ENCODE measurements at regions of chr1 and their contacts with region 1.

Region 1: GRCh38 chr1:33472349-33472980 is at the start of gene ZSCAN20:
- DNase-seq: peak; percentile 96
- ATAC-seq: peak; percentile 95
- H3K4me3 Mint-ChIP-seq: peak within 1 kb of the TSS; percentile 72
- H3K27ac Mint-ChIP-seq: peak within 1 kb of the TSS; percentile 82
- H3K4me1 Mint-ChIP-seq: peaks cover 18% of the 10 kb centered on the region
- H3K27me3 Mint-ChIP-seq: no peaks in the 10 kb centered on the region
- CTCF ChIP-seq: no peak
- total RNA-seq, gene ZSCAN20: 2.6 to 3.2 TPM

Region 2: DNA sequence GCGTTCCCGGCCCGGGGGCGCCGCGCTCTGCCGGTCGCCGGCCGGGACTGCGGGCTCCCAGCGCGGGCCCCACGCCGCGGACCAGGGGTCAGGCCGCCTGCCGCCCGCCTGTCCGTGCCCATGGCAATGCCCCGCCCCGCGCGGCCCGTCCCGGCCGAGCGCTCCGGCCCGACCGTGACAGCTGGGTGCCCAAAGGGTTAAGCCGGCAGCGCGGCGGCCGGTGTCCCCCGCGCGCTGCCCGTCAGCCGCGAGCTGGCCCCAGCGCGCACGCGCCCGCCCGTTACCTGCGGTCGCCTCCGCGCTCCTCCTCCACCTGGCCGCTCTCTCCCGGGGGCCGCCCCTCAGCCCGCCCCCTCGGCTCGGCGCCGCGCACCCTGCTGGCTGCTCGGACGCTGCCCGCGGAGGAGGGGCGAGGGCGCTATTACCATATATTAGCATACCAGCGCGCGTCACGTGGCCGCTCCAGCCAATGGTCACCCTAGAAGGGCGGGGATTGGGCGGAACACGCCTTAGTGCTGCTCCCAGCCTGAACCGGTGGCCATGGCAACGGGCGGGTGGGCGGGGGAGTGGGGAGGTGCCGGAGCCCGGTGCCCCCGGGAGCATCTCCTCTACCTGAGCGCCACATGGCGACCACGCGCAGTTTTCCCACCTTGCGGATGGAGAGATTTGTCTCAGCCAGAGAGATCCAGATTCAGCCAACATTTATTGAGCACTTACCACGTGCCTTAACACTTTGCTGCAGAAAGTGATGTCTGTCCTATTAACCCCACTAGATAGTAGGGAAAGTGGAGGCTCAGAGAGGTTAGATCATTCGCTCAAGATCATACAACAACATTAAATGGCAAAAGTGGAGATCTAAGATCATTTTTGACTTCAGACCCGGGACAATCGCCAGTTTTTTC is 41.5 kb before region 1 on chr1 and contains the start of gene PHC2:
- CTCF ChIA-PET with region 1: interaction called, 15 read pairs
- POLR2A ChIA-PET with region 1: interaction called, 5 read pairs
- intact Hi-C with region 1: loop called (anchors 1 kb)
- DNase-seq: peak; percentile 97
- ATAC-seq: peak; percentile 99
- H3K4me3 Mint-ChIP-seq: peak within 1 kb of the TSS; percentile 51
- H3K27ac Mint-ChIP-seq: no peak within 1 kb of the TSS
- H3K4me1 Mint-ChIP-seq: peaks cover 7% of the 10 kb centered on the region
- H3K27me3 Mint-ChIP-seq: peaks cover 2% of the 10 kb centered on the region
- CTCF ChIP-seq: peak; percentile 27
- total RNA-seq, gene PHC2: 26.0 to 28.0 TPM

Region 3: GRCh38 chr1:33455539-33456501 is 16.6 kb before region 1 on chr1:
- CTCF ChIA-PET with region 1: interaction called, 15 read pairs
- POLR2A ChIA-PET with region 1: interaction called, 3 read pairs
- intact Hi-C with region 1: no loop called
- DNase-seq: peak; percentile 67
- ATAC-seq: peak; percentile 92
- H3K4me3 Mint-ChIP-seq: no peak overlapping the region
- H3K27ac Mint-ChIP-seq: no peak overlapping the region
- H3K4me1 Mint-ChIP-seq: no peaks in the 10 kb centered on the region
- H3K27me3 Mint-ChIP-seq: peaks cover 3% of the 10 kb centered on the region
- CTCF ChIP-seq: peak; percentile 34

Region 4: DNA sequence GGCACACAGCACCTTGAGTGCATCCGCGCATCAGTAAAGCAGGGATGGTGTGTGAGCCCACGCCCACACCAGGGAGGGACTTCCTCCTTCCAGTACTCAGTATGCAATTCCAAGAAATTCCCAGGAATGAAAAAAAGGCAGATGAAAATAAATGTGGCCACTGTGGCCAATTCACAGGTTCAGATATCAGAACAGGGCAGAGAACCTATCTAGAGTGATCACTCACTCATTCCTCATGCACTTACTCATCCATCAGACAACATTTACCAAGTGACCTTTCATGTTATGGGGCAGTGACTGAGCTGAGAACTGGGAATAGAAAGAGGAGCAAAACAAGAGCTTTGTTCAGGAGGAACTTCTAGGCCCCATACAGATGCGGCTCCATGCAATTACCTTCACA is 113.6 kb after region 1 on chr1:
- CTCF ChIA-PET with region 1: no interaction called
- POLR2A ChIA-PET with region 1: no interaction called
- intact Hi-C with region 1: no loop called
- DNase-seq: no peak
- ATAC-seq: no peak
- H3K4me3 Mint-ChIP-seq: no peak overlapping the region
- H3K27ac Mint-ChIP-seq: no peak overlapping the region
- H3K4me1 Mint-ChIP-seq: no peaks in the 10 kb centered on the region
- H3K27me3 Mint-ChIP-seq: peaks cover 6% of the 10 kb centered on the region
- CTCF ChIP-seq: no peak

Region 5: DNA sequence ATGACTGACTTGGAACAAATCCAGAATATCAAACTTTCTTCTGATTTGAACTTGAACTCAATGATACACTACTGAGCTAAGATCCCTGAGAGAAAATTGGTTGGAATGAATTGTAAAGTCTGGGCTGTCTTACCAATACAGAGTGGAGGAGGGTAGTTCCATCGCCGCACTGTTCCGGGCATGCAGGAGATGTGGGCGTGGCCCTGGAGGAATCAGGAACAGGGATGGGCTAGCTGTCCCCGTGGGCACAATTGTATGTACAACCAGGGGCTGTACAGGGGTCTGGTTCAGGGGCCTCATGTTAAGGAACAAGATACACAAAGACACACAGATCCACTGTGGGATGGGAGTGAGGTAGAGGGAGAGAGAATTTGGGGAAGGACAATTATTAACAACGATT is 144.3 kb after region 1 on chr1:
- CTCF ChIA-PET with region 1: interaction called, 13 read pairs
- POLR2A ChIA-PET with region 1: no interaction called
- intact Hi-C with region 1: no loop called
- DNase-seq: no peak
- ATAC-seq: no peak
- H3K4me3 Mint-ChIP-seq: no peak overlapping the region
- H3K27ac Mint-ChIP-seq: no peak overlapping the region
- H3K4me1 Mint-ChIP-seq: no peaks in the 10 kb centered on the region
- H3K27me3 Mint-ChIP-seq: peaks cover 25% of the 10 kb centered on the region
- CTCF ChIP-seq: no peak